CD8-positive, alpha-beta T cell (primary cell): ENCODE measurements at regions of chr19 and their contacts with region 1.

Region 1: GRCh38 chr19:40444192-40445028 is at the start of gene SERTAD3:
- DNase-seq: peak; percentile 93 to 98 (median 97)
- ATAC-seq: peak; percentile 69
- H3K4me3 ChIP-seq: peak within 1 kb of the TSS; percentile 67 to 82
- H3K4me3 Mint-ChIP-seq: peak within 1 kb of the TSS; percentile 99
- H3K27ac ChIP-seq: peak within 1 kb of the TSS; percentile 74 to 80
- H3K27ac Mint-ChIP-seq: peak within 1 kb of the TSS; percentile 96
- H3K4me1 ChIP-seq: peaks cover 15% of the 10 kb centered on the region
- H3K4me1 Mint-ChIP-seq: peaks cover 22% of the 10 kb centered on the region
- H3K27me3 ChIP-seq: no peaks in the 10 kb centered on the region
- H3K27me3 Mint-ChIP-seq: no peaks in the 10 kb centered on the region
- CTCF ChIP-seq: no peak
- total RNA-seq, gene SERTAD3: 27.9 to 33.4 TPM

Region 2: GRCh38 chr19:39341719-39342604 is 1102.4 kb before region 1 on chr19 and contains the start of gene SAMD4B:
- CTCF ChIA-PET with region 1: no interaction called
- POLR2A ChIA-PET with region 1: no interaction called
- intact Hi-C with region 1: loop called in 1 of 2 experiments (anchors 5 kb)
- DNase-seq: peak; percentile 98 to 100 (median 99)
- ATAC-seq: peak; percentile 90
- H3K4me3 ChIP-seq: peak within 1 kb of the TSS; percentile 93 to 97
- H3K4me3 Mint-ChIP-seq: peak within 1 kb of the TSS; percentile 100
- H3K27ac ChIP-seq: peak within 1 kb of the TSS; percentile 67 to 88
- H3K27ac Mint-ChIP-seq: peak within 1 kb of the TSS; percentile 98
- H3K4me1 ChIP-seq: peaks cover 29% of the 10 kb centered on the region
- H3K4me1 Mint-ChIP-seq: peaks cover 69% of the 10 kb centered on the region
- H3K27me3 ChIP-seq: no peaks in the 10 kb centered on the region
- H3K27me3 Mint-ChIP-seq: no peaks in the 10 kb centered on the region
- CTCF ChIP-seq: peak; percentile 73
- total RNA-seq, gene SAMD4B: 68.3 to 78.1 TPM

Region 3: GRCh38 chr19:39996811-39997594 is 447.4 kb before region 1 on chr19 and contains the start of gene ZNF546:
- CTCF ChIA-PET with region 1: no interaction called
- POLR2A ChIA-PET with region 1: no interaction called
- intact Hi-C with region 1: loop called in 1 of 2 experiments (anchors 2 kb)
- DNase-seq: peak; percentile 70 to 94 (median 90)
- ATAC-seq: peak; percentile 88
- H3K4me3 ChIP-seq: peak within 1 kb of the TSS; percentile 80 to 85
- H3K4me3 Mint-ChIP-seq: peak within 1 kb of the TSS; percentile 90
- H3K27ac ChIP-seq: peak within 1 kb of the TSS; percentile 77 to 88
- H3K27ac Mint-ChIP-seq: peak within 1 kb of the TSS; percentile 92
- H3K4me1 ChIP-seq: peaks cover 15% of the 10 kb centered on the region
- H3K4me1 Mint-ChIP-seq: peaks cover 41% of the 10 kb centered on the region
- H3K27me3 ChIP-seq: no peaks in the 10 kb centered on the region
- H3K27me3 Mint-ChIP-seq: no peaks in the 10 kb centered on the region
- CTCF ChIP-seq: no peak
- total RNA-seq, gene ZNF546: 1.6 to 2.4 TPM

Region 4: DNA sequence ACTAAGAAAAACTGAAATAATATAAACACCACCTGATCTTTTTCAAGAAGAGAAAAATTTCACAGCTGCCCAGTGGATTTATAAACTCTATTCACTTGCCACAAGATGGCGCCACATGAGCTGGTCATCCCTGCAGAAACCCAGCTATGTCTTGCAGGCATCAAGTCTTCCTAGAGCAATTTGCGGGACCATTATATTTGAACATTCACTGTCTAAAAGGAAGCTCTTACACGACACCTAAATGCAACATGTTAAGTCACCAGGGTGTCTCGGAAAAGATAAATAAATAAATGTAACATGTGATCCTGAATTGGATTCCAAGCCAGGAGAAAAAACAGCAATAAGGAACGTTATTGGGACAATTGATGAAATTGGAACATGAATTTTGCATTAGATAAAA is 139.0 kb before region 1 on chr19:
- CTCF ChIA-PET with region 1: interaction called, 4 read pairs
- POLR2A ChIA-PET with region 1: no interaction called
- intact Hi-C with region 1: loop called in 1 of 2 experiments (anchors 1 kb)
- DNase-seq: peak; percentile 49 to 85 (median 78)
- ATAC-seq: peak; percentile 59
- H3K4me3 ChIP-seq: no peak overlapping the region
- H3K4me3 Mint-ChIP-seq: no peak overlapping the region
- H3K27ac ChIP-seq: no peak overlapping the region
- H3K27ac Mint-ChIP-seq: no peak overlapping the region
- H3K4me1 ChIP-seq: no peaks in the 10 kb centered on the region
- H3K4me1 Mint-ChIP-seq: peaks cover 2% of the 10 kb centered on the region
- H3K27me3 ChIP-seq: no peaks in the 10 kb centered on the region
- H3K27me3 Mint-ChIP-seq: no peaks in the 10 kb centered on the region
- CTCF ChIP-seq: peak; percentile 83

Region 5: GRCh38 chr19:40425450-40426287 is 18.7 kb before region 1 on chr19 and contains the start of gene SERTAD1:
- CTCF ChIA-PET with region 1: interaction called, 26 read pairs
- POLR2A ChIA-PET with region 1: interaction called, 31 read pairs
- intact Hi-C with region 1: loop called (anchors 1 kb)
- DNase-seq: peak; percentile 100
- ATAC-seq: peak; percentile 93
- H3K4me3 ChIP-seq: peak within 1 kb of the TSS; percentile 72 to 92
- H3K4me3 Mint-ChIP-seq: peak within 1 kb of the TSS; percentile 92
- H3K27ac ChIP-seq: peak within 1 kb of the TSS; percentile 91 to 92
- H3K27ac Mint-ChIP-seq: peak within 1 kb of the TSS; percentile 98
- H3K4me1 ChIP-seq: peaks cover 17% of the 10 kb centered on the region
- H3K4me1 Mint-ChIP-seq: peaks cover 28% of the 10 kb centered on the region
- H3K27me3 ChIP-seq: no peaks in the 10 kb centered on the region
- H3K27me3 Mint-ChIP-seq: no peaks in the 10 kb centered on the region
- CTCF ChIP-seq: peak; percentile 55
- total RNA-seq, gene SERTAD1: 36.7 to 38.7 TPM

Region 6: GRCh38 chr19:40570313-40571004 is 126.0 kb after region 1 on chr19:
- CTCF ChIA-PET with region 1: no interaction called
- POLR2A ChIA-PET with region 1: no interaction called
- intact Hi-C with region 1: loop called (anchors 1 to 5 kb)
- DNase-seq: peak; percentile 86 to 100 (median 94)
- ATAC-seq: peak; percentile 93
- H3K4me3 ChIP-seq: peak overlapping the region; percentile 34 to 51
- H3K4me3 Mint-ChIP-seq: peak overlapping the region; percentile 72
- H3K27ac ChIP-seq: peak overlapping the region in 1 of 2 experiments; percentile 56
- H3K27ac Mint-ChIP-seq: peak overlapping the region; percentile 67
- H3K4me1 ChIP-seq: peaks cover 18% of the 10 kb centered on the region
- H3K4me1 Mint-ChIP-seq: peaks cover 13% of the 10 kb centered on the region
- H3K27me3 ChIP-seq: peaks cover 6 to 9% of the 10 kb centered on the region in 2 experiments
- H3K27me3 Mint-ChIP-seq: peaks cover 11% of the 10 kb centered on the region
- CTCF ChIP-seq: no peak

Region 7: DNA sequence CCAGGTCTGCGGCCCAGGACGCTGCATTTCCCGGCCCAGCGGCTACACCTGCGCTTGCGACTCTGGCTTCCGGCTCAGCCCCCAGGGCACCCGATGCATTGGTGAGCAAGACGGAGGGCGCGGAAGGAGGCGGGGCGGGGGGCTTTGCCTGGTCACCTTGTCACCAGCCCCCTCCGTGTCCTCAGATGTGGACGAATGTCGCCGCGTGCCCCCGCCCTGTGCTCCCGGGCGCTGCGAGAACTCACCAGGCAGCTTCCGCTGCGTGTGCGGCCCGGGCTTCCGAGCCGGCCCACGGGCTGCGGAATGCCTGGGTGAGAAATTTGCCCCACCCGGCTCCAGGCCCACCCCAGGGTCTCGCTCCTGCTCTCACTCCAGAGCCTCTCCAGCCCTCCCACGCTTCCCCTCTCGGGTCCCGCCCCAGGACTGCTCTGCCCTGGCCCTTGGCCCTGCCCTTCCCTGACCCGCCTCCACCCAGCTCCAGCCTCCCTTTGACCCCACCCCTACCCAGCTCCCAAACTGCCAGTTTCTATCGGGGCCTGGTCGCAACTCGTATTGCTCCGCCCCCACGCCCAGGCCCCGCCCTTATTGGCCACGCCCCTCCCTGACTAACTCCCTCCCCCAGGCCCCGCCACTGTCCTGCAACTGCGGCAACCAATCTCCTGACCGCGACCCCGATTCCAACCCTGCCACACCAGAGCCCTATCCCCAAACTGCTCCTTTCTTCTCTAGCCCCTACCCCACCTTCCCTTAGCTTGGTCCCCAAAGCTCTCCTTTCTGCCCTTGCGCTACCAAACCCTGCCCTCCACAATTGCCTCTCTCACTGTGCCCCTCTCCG is 165.4 kb after region 1 on chr19:
- CTCF ChIA-PET with region 1: no interaction called
- POLR2A ChIA-PET with region 1: no interaction called
- intact Hi-C with region 1: loop called (anchors 2 to 5 kb)
- DNase-seq: peak; percentile 71 to 90 (median 84)
- ATAC-seq: peak; percentile 35
- H3K4me3 ChIP-seq: peak overlapping the region; percentile 50 to 56
- H3K4me3 Mint-ChIP-seq: peak overlapping the region; percentile 78
- H3K27ac ChIP-seq: peak overlapping the region; percentile 72 to 89
- H3K27ac Mint-ChIP-seq: peak overlapping the region; percentile 94
- H3K4me1 ChIP-seq: peaks cover 44% of the 10 kb centered on the region
- H3K4me1 Mint-ChIP-seq: peaks cover 68% of the 10 kb centered on the region
- H3K27me3 ChIP-seq: no peaks in the 10 kb centered on the region
- H3K27me3 Mint-ChIP-seq: no peaks in the 10 kb centered on the region
- CTCF ChIP-seq: no peak